CD14-positive monocyte (primary cell): ENCODE measurements at regions of chr1 and their contacts with region 1.

Region 1: DNA sequence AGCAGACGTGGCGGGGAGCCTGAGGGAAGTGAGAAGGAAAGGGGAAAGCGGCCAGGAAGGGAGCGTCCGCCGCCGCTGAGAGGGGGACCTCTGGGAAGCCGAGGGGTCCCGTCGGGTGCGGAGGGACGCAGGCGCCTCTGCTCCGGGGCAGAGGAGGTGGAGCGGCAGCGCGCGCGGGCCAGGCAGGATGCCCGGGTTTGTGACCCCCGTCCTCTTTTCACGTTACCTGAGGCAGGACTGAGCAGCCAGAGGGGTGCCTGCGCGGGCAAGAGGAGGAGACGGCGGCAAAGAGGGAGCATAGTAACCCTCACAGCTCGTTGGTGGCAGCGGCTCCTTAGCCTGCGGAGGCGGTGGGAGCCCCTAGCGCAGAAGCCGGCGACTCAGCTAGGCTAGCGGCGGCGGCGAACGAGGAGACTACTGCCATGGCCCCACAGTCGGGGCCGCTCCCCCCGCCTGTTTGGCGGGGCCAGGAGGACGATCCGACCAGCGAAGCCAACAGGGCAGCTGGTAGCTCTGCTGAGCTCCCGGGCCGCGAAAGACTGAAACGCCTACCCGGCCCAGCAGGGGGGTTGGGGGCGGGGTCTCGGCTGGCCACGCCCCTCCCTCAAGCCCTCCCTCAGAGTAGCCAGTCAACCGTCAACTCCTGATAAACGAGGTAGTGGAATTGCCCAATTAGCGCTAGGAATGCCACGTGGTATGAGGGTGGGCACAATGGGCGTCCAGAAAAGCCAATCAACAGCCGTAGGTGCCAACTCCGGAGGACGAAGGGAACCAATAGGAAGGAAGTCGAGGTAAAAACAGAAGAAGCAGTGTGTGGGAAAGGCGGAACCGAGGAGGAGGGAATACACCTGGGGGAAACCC is at the start of gene TESK2:
- DNase-seq: peak; percentile 99 to 100 (median 99)
- H3K4me3 ChIP-seq: peak within 1 kb of the TSS; percentile 72 to 99 (median 97)
- H3K4me3 Mint-ChIP-seq: no peak within 1 kb of the TSS
- H3K27ac ChIP-seq: peak within 1 kb of the TSS; percentile 52 to 76
- H3K27ac Mint-ChIP-seq: peak within 1 kb of the TSS in 1 of 7 donors; percentile 21
- H3K4me1 ChIP-seq: peaks cover 23 to 28% of the 10 kb centered on the region in 2 donors
- H3K4me1 Mint-ChIP-seq: peaks cover 5% of the 10 kb centered on the region
- H3K27me3 ChIP-seq: no peaks in the 10 kb centered on the region
- H3K27me3 Mint-ChIP-seq: peaks cover 0 to 3% (median 3%) of the 10 kb centered on the region in 3 donors
- CTCF ChIP-seq: no peak
- polyA plus RNA-seq, gene TESK2: 3.9 to 13.1 (median 4.1) TPM

Region 2: GRCh38 chr1:45410850-45411314 is 80.0 kb before region 1 on chr1:
- intact Hi-C with region 1: loop called in 1 of 2 experiments (anchors 5 kb)
- DNase-seq: peak; percentile 21 to 53 (median 47)
- H3K4me3 ChIP-seq: no peak overlapping the region
- H3K4me3 Mint-ChIP-seq: no peak overlapping the region
- H3K27ac ChIP-seq: no peak overlapping the region
- H3K27ac Mint-ChIP-seq: peak overlapping the region in 3 of 7 donors; percentile 31 to 50 (median 37)
- H3K4me1 ChIP-seq: peaks cover 33 to 44% of the 10 kb centered on the region in 2 donors
- H3K4me1 Mint-ChIP-seq: peaks cover 50% of the 10 kb centered on the region
- H3K27me3 ChIP-seq: no peaks in the 10 kb centered on the region
- H3K27me3 Mint-ChIP-seq: peaks cover 0 to 2% (median 0%) of the 10 kb centered on the region in 3 donors
- CTCF ChIP-seq: no peak